ENCODE measurements at regions of chr2 and their contacts with region 1.

Region 1: GRCh38 chr2:200471324-200471848 is 38.5 kb downstream of the KCTD18 start:
- DNase-seq: no peak
- H3K4me3 ChIP-seq: no peak overlapping the region
- H3K27ac ChIP-seq: no peak overlapping the region
- H3K4me1 ChIP-seq: peaks cover 2% of the 10 kb centered on the region
- H3K27me3 ChIP-seq: no peaks in the 10 kb centered on the region
- CTCF ChIP-seq: no peak
- EP300 ChIP-seq: no peak
- POLR2A ChIP-seq: no peak

Region 2: DNA sequence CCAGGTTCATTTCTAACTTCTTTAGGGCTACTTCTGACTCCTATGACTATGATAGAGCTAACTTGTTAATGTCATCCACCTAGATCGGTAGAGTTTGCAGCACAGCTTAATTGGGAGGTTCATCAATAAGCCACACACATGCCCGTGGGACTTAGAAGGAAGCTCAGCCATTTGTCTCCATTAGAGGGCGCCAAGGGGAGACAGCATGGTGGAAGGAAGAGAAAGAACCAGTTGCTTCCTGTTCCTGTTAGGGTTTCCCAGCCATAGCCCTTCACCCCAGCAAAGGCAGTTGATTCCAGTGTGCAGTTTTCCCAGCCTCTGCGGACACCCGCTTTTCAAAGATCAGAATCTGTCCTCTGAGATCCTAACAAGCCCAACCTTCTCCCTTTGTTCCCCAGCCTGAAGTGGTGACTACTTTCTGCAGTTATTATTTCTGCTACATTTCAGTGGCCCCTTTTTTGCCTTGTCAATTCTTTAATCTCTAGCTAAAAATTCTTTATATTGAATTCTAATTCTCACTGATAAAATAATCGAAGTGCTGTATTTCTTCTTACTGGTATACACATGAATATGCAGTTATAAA is 485.7 kb before region 1 on chr2:
- intact Hi-C with region 1: loop called in 1 of 4 experiments (anchors 10 kb)
- DNase-seq: peak; percentile 38 to 63 (median 41)
- H3K4me3 ChIP-seq: no peak overlapping the region
- H3K27ac ChIP-seq: no peak overlapping the region
- H3K4me1 ChIP-seq: no peaks in the 10 kb centered on the region
- H3K27me3 ChIP-seq: no peaks in the 10 kb centered on the region
- CTCF ChIP-seq: peak in 2 of 3 donors; percentile 24 to 34
- EP300 ChIP-seq: no peak
- POLR2A ChIP-seq: no peak

Region 3: GRCh38 chr2:200306196-200306930 is 165.0 kb before region 1 on chr2 and contains the start of gene SPATS2L:
- intact Hi-C with region 1: loop called in 2 of 4 experiments (anchors 10 kb)
- DNase-seq: peak; percentile 81 to 86 (median 83)
- H3K4me3 ChIP-seq: peak within 1 kb of the TSS; percentile 73
- H3K27ac ChIP-seq: peak within 1 kb of the TSS; percentile 95
- H3K4me1 ChIP-seq: peaks cover 5% of the 10 kb centered on the region
- H3K27me3 ChIP-seq: no peaks in the 10 kb centered on the region
- CTCF ChIP-seq: no peak
- EP300 ChIP-seq: no peak
- POLR2A ChIP-seq: peak; percentile 22
- total RNA-seq, gene SPATS2L: 36.5 to 88.2 (median 70.6) TPM